ENCODE measurements at regions of chr14 and their contacts with region 1.

Region 1: GRCh38 chr14:25472700-25473099 is 422.8 kb upstream of the STXBP6 start:
- DNase-seq: no peak
- H3K4me3 ChIP-seq: no peak overlapping the region
- H3K27ac ChIP-seq: no peak overlapping the region
- H3K4me1 ChIP-seq: no peaks in the 10 kb centered on the region
- H3K27me3 ChIP-seq: no peaks in the 10 kb centered on the region
- CTCF ChIP-seq: no peak
- EP300 ChIP-seq: no peak
- POLR2A ChIP-seq: no peak

Region 2: GRCh38 chr14:25508845-25509244 is 36.1 kb after region 1 on chr14:
- in situ Hi-C with region 1: no loop called
- intact Hi-C with region 1: loop called (anchors 2 kb)
- DNase-seq: no peak
- H3K4me3 ChIP-seq: no peak overlapping the region
- H3K27ac ChIP-seq: no peak overlapping the region
- H3K4me1 ChIP-seq: no peaks in the 10 kb centered on the region
- H3K27me3 ChIP-seq: no peaks in the 10 kb centered on the region
- CTCF ChIP-seq: no peak
- EP300 ChIP-seq: no peak
- POLR2A ChIP-seq: no peak

Region 3: DNA sequence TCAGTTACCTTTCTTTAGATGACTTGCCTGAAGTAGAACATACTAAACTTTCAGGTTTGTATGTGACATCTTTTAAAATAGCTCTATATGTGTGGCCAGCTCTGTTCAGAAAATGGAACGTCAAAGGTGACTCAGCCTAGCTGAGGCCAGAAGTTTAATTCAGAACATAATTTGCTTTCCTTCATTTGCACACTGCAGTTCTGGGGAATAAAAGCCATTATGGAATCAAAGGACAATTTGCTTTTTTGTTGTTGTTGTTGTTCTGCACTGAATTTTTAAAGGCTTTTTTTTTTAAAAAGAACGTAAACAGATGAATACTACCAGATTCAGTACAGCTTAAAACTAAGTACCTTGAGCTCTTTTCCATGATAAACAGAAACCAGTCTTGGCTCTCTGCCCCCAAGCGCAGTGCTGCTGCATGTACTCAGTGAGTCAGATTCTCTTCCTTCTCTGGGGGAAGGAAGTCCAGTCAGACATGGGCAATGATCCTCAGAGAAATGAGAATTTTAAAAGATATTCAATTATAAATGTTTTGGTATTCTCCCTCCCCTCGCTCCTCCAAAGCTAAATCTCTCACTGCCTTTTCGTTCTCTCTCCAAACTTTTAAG is 480.9 kb after region 1 on chr14:
- in situ Hi-C with region 1: no loop called
- intact Hi-C with region 1: no loop called
- DNase-seq: peak; percentile 40
- H3K4me3 ChIP-seq: no peak overlapping the region
- H3K27ac ChIP-seq: peak overlapping the region in 3 of 4 donors; percentile 9 to 25 (median 18)
- H3K4me1 ChIP-seq: no peaks in the 10 kb centered on the region
- H3K27me3 ChIP-seq: no peaks in the 10 kb centered on the region
- CTCF ChIP-seq: no peak
- EP300 ChIP-seq: no peak
- POLR2A ChIP-seq: no peak

Measured in transverse colon (tissue), 4 donors.